ENCODE measurements at regions of chr4 and their contacts with region 1.

Region 1: DNA sequence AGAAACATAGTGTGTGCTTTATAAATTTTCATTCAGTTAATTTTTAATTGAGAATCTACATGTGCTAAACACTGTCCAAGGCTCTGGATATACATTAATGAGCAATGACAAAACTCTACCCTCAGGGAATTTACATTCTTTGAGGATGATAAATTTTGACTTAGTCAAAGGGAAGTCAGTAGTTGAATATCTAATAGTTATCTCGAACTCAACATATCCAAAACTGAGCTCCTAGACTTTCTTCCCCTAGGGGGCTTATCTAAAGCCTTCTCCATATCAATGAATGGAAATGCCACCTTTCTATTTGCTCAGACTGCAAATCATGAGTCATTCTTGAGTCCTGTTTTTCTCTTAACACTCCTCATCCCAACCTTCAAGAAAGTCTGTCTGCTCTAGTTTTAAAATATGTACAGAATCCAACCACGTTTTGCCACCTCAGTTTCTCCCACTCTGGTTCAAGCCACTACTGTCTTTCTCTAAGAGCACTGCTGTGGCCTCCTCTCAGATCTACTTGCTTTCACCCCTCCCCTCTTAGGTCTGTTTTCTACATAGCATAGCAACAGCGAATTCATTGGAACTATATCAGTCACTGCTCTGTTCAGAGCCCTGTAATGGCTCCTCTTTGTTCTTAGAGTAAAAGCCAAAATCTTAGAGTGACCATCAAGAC is 9.5 kb downstream of the PARM1 start:
- DNase-seq: no peak
- ATAC-seq: peak in 1 of 8 donors; percentile 20
- H3K4me3 ChIP-seq: no peak overlapping the region
- H3K27ac ChIP-seq: no peak overlapping the region
- H3K4me1 ChIP-seq: peaks cover 0 to 45% (median 6%) of the 10 kb centered on the region in 9 donors
- H3K27me3 ChIP-seq: peaks cover 0 to 4% (median 0%) of the 10 kb centered on the region in 7 donors
- CTCF ChIP-seq: no peak

Region 2: DNA sequence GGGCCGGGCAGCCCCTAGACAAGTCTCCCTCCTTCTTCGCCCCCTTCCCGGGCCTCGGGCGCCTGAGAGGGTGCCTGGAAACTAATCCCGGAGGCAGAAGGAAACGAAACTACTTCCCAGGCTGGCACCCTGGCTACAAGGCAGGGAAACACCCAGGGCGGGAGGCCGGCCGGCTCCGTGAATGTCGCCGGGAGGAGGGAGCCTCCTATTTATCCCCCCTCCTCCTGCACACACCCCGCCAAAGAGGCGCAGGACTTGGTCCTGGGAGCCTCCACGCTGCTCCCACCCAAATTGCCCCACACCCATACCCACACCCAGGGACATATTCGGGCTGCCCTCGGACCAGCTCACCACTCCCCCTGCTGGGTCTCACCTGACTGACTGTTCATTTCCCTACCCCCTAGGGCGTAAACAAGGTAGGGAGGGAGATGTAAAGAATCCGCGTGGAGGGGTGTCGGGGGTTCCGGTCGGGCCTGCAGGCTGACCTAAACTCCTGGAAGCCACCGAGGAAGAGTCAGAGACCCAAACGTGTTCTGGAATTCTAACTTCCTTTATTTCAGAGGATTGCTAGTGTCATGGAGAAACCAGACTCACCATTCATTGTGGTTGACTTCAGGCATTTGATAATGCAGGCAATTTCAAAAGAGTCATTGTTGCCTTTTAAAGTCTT is 147.9 kb before region 1 on chr4 and contains the start of gene BTC:
- intact Hi-C with region 1: no loop called
- DNase-seq: peak; percentile 13 to 18
- ATAC-seq: peak; percentile 61 to 92 (median 70)
- H3K4me3 ChIP-seq: peak within 1 kb of the TSS; percentile 11 to 66 (median 54)
- H3K27ac ChIP-seq: peak within 1 kb of the TSS in 1 of 10 donors; percentile 31
- H3K4me1 ChIP-seq: peaks cover 0 to 12% (median 0%) of the 10 kb centered on the region in 9 donors
- H3K27me3 ChIP-seq: peaks cover 0 to 53% (median 26%) of the 10 kb centered on the region in 7 donors
- CTCF ChIP-seq: peak in 4 of 9 donors; percentile 20 to 42 (median 22)
- total RNA-seq, gene BTC: 0.07 to 0.88 (median 0.34) TPM in 9 of 10 donors, not detected in the other

Region 3: GRCh38 chr4:74999714-75000309 is 57.4 kb after region 1 on chr4:
- intact Hi-C with region 1: loop called in 1 of 10 experiments (anchors 2 kb)
- DNase-seq: no peak
- ATAC-seq: peak in 3 of 8 donors; percentile 37 to 48 (median 38)
- H3K4me3 ChIP-seq: no peak overlapping the region
- H3K27ac ChIP-seq: no peak overlapping the region
- H3K4me1 ChIP-seq: peaks cover 0 to 49% (median 14%) of the 10 kb centered on the region in 9 donors
- H3K27me3 ChIP-seq: no peaks in the 10 kb centered on the region
- CTCF ChIP-seq: no peak